ENCODE measurements at regions of chr11 and their contacts with region 1.

Region 1: DNA sequence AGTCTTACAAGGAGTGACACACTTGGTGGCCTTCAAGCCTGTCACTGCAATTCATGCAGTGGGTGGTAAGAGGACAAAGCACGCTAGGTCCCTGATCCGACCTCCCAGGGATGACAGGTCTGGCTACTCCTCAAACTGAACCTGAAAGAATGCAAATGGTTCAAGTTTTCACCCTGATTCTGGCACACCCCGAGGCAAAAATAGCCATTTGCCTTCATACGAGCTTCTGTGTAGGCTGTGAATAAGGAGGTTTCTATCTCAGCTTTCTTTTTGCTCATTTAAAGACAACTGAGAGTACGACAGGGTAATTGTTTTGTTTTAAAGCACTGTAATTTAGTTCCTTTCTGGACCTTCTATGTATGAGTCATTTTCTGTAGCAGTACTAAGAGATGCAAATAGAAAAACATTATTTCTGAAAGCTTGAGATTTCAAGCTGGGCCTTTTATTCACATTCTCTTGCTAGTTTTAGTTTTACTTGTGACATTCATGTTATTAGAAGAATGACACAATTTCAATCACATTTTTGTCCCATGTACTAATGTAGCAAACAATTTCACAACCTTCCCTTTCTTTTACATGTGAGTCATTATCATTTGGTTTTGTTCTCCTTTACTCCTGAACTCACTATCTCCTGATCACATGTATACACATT is 56.6 kb upstream of the FDX1 start:
- DNase-seq: no peak
- ATAC-seq: no peak
- H3K4me3 ChIP-seq: no peak overlapping the region
- H3K27ac ChIP-seq: peak overlapping the region; percentile 63
- H3K4me1 ChIP-seq: no peaks in the 10 kb centered on the region
- H3K27me3 ChIP-seq: no peaks in the 10 kb centered on the region
- CTCF ChIP-seq: no peak

Region 2: DNA sequence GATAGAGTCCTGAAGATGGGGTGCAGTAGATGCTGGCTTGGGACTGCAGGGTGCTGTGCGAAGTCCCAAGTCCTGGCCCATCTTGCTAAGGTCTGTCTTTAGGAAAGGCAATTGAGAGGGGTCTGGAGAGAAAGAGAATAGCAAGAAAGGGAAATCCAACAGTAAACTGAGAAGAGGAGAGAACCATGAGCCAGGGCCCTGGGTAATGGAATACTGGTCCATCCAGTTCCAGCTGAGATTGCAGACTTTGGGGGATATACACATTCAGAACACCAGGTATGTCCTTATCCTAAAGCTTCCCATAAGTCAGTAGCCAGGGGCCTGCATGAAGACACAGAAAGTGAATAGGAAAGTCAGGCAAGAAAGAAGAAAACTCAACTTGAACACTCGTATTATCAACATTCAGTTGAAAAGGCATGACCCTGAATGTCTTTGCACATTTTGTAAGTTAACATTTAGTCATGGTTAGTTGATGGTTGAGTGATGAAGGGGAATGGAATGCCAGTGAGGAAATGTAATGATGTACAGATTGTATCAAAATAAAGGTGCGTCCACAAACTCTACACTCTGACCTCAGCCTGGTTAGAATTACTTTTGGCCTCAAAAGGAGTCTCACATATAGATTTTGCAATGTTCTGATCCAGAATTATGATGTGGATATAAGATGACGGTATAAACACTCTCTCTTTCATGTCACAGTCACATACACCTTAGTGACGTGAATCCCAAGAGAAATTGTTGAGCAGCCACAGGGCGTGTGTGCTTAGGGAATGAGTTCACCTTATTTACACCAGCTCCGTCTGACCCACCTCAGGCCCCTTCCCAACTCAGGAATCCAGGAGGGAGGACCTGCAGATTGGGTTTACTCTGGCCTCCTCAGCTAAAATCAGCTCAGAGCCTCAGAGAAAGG is 177.1 kb before region 1 on chr11:
- intact Hi-C with region 1: loop called (anchors 5 kb)
- DNase-seq: no peak
- ATAC-seq: peak; percentile 37
- H3K4me3 ChIP-seq: no peak overlapping the region
- H3K27ac ChIP-seq: no peak overlapping the region
- H3K4me1 ChIP-seq: no peaks in the 10 kb centered on the region
- H3K27me3 ChIP-seq: no peaks in the 10 kb centered on the region
- CTCF ChIP-seq: no peak